ENCODE measurements at regions of chr12 and their contacts with region 1.

Region 1: GRCh38 chr12:51814311-51815088 is 34.0 kb downstream of the FIGNL2 start:
- DNase-seq: peak; percentile 90
- ATAC-seq: peak; percentile 77

Region 2: GRCh38 chr12:50314629-50315312 is 1499.7 kb before region 1 on chr12:
- intact Hi-C with region 1: loop called (anchors 5 kb)
- DNase-seq: peak; percentile 42
- ATAC-seq: no peak

Region 3: DNA sequence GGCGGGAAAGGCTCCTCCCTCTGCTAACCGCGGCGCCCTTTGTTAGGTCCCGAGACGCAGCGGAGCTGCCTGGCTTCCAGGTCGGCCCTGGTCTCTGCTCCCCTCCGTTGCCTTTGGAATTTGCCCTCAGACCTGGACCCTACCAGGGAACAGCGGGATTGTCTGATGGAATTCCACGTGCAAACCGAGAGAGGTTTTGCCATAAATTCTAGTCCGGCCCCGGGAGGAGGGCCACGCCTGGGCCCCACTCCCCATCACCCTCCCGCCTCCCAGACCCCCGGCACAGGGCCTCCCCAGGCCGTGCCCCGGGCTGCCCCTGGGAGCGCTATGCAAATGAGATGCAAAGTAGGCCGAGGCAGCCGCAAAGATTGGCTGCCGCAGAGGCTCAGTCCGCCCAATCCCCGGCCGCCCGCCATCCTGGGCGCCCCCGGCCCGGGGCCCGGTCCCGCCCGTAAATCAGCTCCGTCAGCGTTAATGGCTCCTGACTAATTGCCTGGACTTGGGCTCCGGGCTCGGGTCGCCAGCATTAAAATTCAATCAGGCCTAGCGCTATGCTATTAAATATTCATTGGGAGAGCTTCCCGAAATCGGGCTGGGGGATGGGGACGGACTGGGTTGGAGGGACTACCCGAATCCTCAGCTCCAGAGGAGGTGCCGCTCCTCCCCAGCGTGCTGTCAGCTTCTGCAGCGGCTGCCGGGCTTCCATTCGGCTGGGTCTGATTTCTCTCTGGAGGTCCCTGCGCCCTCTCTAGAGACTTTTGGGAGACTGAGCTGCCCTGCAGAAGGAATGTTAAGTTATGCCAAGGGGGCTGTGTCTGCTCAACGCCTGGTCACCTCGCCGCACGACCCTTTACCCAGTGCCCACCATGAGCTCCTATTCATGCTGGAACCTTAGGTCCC is 49.7 kb after region 1 on chr12:
- intact Hi-C with region 1: no loop called
- DNase-seq: peak; percentile 68
- ATAC-seq: peak; percentile 73

Region 4: GRCh38 chr12:52073531-52074381 is 259.3 kb after region 1 on chr12:
- intact Hi-C with region 1: no loop called
- DNase-seq: no peak
- ATAC-seq: peak; percentile 1

Measured in sciatic nerve (tissue), 2 donors.